HEK293T (cell line): ENCODE measurements at regions of chr11 and their contacts with region 1.

Region 1: GRCh38 chr11:65779851-65780577 is 762 bp downstream of the AP5B1 start:
- DNase-seq: peak; percentile 89

Region 2: DNA sequence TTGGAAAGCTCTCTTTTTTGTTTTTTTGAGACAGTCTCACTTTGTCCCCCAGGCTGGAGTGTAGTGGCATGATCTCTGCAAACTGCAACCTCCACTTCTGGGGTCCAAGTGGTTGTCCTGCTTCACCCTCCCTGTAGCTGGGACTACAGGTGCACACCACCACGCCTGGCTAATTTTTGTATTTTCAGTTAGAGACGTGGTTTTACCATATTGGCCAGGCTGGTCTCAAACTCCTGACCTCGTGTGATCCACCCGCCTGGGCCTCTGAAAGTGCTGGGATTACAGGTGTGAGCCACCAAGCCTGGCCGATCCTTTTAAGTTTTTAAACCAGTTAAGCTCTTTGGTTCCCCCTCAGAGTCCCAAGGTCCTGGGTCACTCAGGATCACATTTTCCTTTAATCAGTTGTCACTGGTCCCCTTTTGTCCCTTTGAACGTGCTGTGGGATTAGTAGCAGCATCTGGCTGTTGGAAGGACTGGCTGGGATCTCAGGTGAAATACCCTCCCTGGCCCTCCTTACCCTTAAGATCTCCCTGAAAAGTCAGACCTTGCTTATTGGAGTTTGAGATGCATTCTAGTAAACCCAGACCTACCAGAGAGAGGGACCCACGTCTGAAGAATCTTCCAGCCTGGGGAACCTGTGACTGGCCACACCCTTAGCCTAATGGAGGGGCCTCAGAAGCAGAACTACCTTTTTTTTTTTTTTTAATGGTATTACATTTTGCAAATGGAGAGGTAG is 273.1 kb before region 1 on chr11:
- CTCF ChIA-PET with region 1: no interaction called
- POLR2A ChIA-PET with region 1: no interaction called
- DNase-seq: no peak

Region 3: DNA sequence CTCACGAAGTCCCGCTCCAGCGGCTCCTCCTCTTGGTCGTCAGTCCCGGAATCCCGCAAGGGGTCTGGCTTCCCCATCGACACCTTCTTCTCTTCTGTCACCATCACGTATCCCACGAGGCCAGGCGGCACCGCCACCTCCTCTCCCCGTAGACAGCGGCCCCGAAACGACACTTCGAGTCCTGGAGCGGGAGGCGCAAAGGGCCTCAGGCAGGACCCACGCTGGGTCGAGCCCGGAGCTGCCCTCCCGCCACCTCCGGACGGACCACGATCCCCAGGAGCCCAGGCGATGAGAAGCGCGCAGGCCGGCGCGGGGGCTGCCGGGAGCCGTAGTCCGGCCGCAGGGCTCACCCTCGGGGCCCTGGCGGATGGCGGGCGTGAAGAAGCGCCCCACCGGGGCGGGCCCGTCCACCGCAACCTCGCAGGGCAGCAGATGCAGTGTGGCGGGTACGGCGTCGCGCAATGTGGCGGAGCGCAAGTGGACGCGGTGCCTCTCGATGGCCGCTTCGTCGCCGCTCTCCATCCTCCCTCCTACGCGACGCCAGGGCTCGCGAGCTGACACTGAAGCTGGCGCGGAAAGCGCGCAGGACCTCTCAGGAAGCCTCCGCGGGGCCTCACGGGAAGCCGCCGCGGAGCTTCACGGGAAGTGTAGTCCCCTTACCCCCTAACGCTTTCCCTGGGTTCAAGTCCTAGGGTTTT is 59.6 kb before region 1 on chr11 and contains the start of gene RNASEH2C:
- CTCF ChIA-PET with region 1: interaction called, 6 read pairs
- POLR2A ChIA-PET with region 1: interaction called, 10 read pairs
- DNase-seq: peak; percentile 85

Region 4: DNA sequence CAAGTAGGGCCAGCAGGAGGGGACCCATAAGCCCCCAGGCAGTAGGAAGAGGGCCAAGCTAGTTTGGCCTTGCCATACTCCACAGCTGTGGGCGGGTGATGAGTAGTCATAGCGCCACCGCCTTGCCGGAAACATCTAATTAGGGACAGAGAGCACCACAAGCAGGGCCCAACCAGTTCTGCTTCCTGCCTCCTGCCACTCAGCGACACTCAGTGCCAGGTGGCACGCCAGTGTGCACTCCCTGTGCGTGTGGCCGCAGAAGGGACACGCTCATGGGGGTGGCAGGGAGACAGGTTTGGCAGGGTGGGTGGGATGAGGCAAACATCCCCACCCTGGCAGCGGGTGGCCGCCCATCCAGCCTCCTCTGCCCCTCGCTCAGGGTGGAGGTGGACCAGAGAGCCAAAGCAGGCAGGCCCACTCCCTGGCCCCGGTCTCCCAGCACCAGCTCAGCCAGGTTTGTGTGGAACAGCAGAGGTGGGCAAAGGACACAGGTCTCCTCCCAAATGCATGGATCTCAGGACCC is 11.7 kb after region 1 on chr11:
- CTCF ChIA-PET with region 1: interaction called, 23 read pairs
- POLR2A ChIA-PET with region 1: interaction called, 4 read pairs
- DNase-seq: no peak

Region 5: GRCh38 chr11:65810046-65810868 is 30.2 kb after region 1 on chr11:
- CTCF ChIA-PET with region 1: interaction called, 15 read pairs
- POLR2A ChIA-PET with region 1: interaction called, 7 read pairs
- DNase-seq: no peak

Region 6: DNA sequence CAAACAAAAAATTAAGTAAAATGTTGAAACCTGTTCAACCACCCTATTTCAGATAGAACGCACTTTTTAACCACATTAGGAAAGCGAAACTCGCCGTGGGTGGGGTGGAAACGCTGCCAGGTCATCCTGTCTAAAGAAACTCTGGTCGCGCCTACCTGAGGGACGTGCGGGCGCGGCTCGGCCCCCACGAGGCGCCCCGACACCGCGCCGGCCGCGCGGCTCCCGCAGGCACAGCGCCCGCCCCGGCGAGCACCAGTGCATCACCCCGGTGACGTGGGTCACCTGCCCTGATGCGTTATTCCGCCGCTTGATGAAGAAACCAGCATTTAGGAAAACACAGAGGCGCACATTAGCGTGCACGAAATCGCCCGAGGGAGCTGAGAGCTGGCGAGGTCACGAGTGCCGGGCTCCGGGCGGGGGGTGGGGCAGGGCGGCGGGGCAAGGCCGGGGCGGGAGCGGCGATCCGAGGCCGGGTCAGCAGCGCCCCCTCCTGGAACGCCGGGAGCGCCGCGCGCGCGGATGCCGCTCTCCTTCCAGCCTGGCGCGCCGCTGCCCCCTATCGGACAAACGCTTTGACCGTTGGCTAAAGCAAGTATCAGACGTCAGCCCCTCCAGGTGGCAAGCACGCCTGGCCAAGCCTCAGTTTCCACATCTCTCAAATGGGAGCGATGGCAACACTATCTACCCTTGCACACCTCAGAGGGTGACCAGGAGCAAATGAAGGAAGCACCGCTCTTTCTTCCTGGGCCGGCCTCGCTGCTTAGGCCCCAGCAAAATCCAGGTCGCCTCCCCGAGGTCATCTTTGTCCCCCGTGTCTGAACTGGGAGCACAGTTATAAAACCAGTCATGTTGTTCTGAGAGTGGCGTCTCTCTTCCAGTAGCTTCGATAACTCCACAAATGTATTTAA is 38.1 kb after region 1 on chr11:
- CTCF ChIA-PET with region 1: interaction called, 15 read pairs
- POLR2A ChIA-PET with region 1: interaction called, 8 read pairs
- DNase-seq: peak; percentile 96

Region 7: GRCh38 chr11:65927904-65928397 is 147.9 kb after region 1 on chr11:
- CTCF ChIA-PET with region 1: no interaction called
- POLR2A ChIA-PET with region 1: no interaction called
- DNase-seq: no peak